Vagina (tissue), 2 donors: ENCODE measurements at regions of chr12 and their contacts with region 1.

Region 1: DNA sequence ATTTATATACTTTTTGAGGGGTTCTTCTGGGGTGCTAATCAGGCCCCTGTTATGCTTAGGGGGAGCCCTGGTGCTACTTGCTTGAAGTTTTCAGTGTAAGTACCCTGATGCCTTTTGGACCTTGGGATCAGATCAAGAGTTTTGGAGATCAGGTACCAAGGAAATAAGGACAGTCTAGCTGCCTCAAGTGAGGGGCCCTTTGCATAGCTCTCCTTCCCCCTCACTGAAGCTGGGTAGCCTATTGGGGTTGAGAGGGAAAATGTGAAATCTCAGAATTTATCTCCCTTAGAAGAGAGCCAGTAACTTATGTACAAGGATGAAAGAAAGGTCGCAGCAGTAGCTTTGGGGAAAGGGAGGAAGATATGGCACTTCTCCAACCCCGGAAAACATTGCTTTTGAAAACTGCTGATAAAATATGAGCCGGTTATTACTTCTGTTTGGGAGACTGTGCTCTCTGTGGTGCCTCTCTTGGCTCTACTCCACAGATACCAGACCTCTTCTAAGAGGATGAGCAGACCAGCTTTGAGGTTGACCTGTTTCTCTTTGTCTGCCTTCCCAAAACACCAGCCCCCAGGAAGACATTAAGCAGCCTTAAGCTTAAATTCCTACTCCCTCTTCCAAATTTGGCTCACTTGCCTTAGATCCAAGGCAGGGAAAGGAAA is 8.8 kb upstream of the AMHR2 start:
- DNase-seq: no peak
- H3K4me3 ChIP-seq: no peak overlapping the region
- H3K27ac ChIP-seq: peak overlapping the region; percentile 33
- H3K4me1 ChIP-seq: peaks cover 16% of the 10 kb centered on the region
- H3K27me3 ChIP-seq: no peaks in the 10 kb centered on the region
- CTCF ChIP-seq: no peak
- POLR2A ChIP-seq: no peak

Region 2: GRCh38 chr12:53213348-53213747 is 201.5 kb before region 1 on chr12:
- intact Hi-C with region 1: loop called (anchors 10 kb)
- DNase-seq: no peak
- H3K4me3 ChIP-seq: no peak overlapping the region
- H3K27ac ChIP-seq: peak overlapping the region; percentile 99
- H3K4me1 ChIP-seq: peaks cover 64% of the 10 kb centered on the region
- H3K27me3 ChIP-seq: no peaks in the 10 kb centered on the region
- CTCF ChIP-seq: peak; percentile 92 to 98 (median 96)
- POLR2A ChIP-seq: no peak

Region 3: GRCh38 chr12:53352331-53353256 is 62.3 kb before region 1 on chr12:
- intact Hi-C with region 1: loop called (anchors 2 kb)
- DNase-seq: no peak
- H3K4me3 ChIP-seq: no peak overlapping the region
- H3K27ac ChIP-seq: no peak overlapping the region
- H3K4me1 ChIP-seq: no peaks in the 10 kb centered on the region
- H3K27me3 ChIP-seq: no peaks in the 10 kb centered on the region
- CTCF ChIP-seq: peak; percentile 80 to 97 (median 81)
- POLR2A ChIP-seq: no peak